ENCODE measurements at regions of chrX and their contacts with region 1.

Region 1: GRCh38 chrX:155148724-155149537 is 67.3 kb upstream of the VBP1 start:
- DNase-seq: no peak
- H3K4me3 ChIP-seq: no peak overlapping the region
- H3K27ac ChIP-seq: no peak overlapping the region
- H3K27me3 ChIP-seq: no peaks in the 10 kb centered on the region
- CTCF ChIP-seq: peak; percentile 56

Region 2: DNA sequence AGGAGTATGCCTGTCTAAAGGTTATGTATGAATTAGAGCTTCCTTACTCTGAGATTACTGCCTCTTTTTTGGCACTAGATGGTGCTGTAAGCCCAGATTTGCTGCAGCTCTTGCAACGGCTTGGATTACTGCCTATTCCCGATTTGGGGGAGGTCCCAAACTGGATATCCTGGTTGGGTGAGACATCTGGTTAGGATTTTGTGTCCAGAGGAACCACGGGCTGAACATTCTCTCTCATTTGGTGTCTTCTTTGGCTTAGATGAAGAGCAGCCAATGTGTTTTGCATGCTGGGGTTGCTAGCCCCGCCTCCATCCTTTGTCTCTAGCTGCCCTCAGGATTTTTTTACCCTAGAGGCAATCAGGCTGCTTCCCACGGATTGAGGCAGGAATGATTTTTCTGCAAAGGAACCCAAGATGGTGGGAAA is 230.9 kb before region 1 on chrX:
- CTCF ChIA-PET with region 1: interaction called, 28 read pairs
- POLR2A ChIA-PET with region 1: no interaction called
- DNase-seq: peak; percentile 71
- H3K4me3 ChIP-seq: peak overlapping the region; percentile 7; the same call in 1 of the 2 replicates
- H3K27ac ChIP-seq: no peak overlapping the region
- H3K27me3 ChIP-seq: no peaks in the 10 kb centered on the region
- CTCF ChIP-seq: peak; percentile 69

Region 3: DNA sequence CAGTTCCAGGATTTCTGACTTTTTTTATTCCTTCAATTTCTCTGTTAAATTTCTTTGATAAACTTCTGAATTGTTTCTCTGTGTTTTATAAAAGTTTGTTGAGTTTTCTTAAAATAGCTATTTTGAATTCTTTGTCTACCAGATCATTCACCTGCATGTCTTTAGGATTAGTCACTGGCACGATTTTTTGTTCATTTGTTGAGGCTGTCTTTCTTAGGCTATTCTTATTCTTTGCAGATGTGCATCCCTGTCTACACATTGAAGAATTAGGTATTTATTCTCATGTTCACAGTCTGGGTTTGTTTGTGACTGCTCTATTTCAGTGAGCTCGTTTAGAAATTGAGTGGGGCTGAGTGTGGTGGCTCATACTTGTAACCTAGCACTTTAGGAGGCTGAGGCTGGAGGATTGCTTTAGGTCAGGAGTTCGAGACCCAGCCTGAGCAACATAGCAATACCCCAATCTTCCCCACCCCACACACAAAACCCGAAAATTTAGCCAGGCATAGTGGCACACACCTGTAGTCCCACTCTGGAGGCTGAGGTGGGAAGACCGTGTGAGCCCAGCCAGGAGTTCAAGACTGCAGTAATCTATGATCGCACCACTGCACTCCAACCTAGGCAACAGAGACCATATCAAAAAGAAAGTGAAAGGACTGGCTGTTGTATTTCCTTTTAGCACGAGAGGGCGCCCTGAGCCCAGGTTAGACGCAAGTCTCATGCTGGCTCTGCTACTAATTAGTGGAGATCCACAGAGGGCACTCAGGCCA is 168.4 kb before region 1 on chrX:
- CTCF ChIA-PET with region 1: interaction called, 17 read pairs
- POLR2A ChIA-PET with region 1: no interaction called
- DNase-seq: peak; percentile 11
- H3K4me3 ChIP-seq: peak overlapping the region; percentile 58
- H3K27ac ChIP-seq: no peak overlapping the region
- H3K27me3 ChIP-seq: no peaks in the 10 kb centered on the region
- CTCF ChIP-seq: peak; percentile 60

Region 4: DNA sequence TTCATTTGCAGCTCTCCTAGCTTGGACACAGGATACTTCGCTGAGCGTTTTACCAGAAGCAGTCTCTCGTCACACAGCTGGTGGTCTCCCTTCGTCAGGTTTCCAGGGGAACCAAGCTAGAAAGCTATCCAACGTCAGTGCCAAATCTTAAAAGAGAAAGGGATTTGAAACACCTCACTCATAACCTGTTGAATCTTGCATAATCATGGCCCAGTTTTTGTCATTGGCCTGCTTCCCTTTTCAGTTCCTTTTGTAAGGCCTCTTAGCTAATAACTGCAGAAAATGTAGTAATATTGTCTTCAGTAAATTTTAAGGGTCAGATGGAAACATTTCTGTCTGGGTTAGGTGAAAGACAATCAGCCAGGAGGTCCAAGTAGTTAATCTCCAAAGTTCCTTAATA is 93.4 kb after region 1 on chrX:
- CTCF ChIA-PET with region 1: no interaction called
- POLR2A ChIA-PET with region 1: no interaction called
- DNase-seq: no peak
- H3K4me3 ChIP-seq: no peak overlapping the region
- H3K27ac ChIP-seq: no peak overlapping the region
- H3K27me3 ChIP-seq: no peaks in the 10 kb centered on the region
- CTCF ChIP-seq: no peak